CD14-positive monocyte (primary cell): ENCODE measurements at regions of chr17 and their contacts with region 1.

Region 1: DNA sequence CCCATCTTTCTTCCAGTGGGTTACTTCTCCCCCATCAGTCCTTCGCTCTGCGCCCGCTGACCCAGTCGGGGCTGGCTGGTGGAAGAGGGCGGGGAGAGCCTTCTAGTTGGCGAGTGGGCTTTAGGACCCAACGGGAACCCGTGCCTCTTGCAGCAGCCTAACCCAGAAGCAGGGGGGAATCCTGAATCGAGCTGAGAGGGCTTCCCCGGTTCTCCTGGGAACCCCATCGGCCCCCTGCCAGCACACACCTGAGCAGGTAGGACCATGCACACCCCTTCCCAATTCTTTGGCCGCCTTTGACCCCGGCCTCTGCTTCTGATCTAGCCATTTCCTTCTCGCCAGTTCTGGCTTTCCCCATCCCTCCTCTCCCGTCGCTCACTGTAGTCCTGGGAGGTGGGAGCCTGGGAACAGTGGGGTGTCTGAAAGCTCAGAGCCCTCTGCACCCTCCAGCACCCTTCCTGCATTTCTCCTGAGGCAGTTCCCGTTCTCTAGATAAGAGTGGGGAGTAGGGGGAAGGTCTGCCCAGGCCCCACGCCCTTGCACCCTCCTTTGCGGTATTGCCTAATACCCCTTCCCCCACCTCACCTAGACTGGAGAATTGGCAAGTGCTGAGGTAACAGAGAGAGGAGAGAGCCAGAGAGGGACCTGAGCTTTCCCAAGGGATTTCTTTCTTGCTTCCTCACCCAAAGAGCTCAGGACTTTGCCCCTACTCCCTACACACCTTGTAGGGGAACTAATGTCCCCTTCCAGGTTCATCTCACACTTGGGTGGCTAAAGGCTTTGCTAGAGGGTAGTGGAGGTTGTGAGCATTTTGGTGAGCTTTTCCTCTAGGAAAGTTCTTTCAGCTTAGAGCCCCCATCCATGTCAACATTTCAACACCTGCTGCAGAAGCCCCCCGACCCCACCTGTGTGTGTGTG is at the start of gene RARA:
- DNase-seq: peak in 1 of 3 donors; percentile 37
- H3K4me3 ChIP-seq: peak within 1 kb of the TSS; percentile 13 to 80 (median 41)
- H3K4me3 Mint-ChIP-seq: no peak within 1 kb of the TSS
- H3K27ac ChIP-seq: peak within 1 kb of the TSS in 1 of 2 donors; percentile 74
- H3K27ac Mint-ChIP-seq: peak within 1 kb of the TSS in 2 of 7 donors; percentile 49 to 89
- H3K4me1 ChIP-seq: peaks cover 67 to 77% of the 10 kb centered on the region in 2 donors
- H3K4me1 Mint-ChIP-seq: peaks cover 2% of the 10 kb centered on the region
- H3K27me3 ChIP-seq: no peaks in the 10 kb centered on the region
- H3K27me3 Mint-ChIP-seq: peaks cover 0 to 8% (median 5%) of the 10 kb centered on the region in 3 donors
- CTCF ChIP-seq: no peak
- polyA plus RNA-seq, gene RARA: 14.9 to 63.9 (median 29.4) TPM

Region 2: GRCh38 chr17:40251576-40251975 is 57.7 kb before region 1 on chr17:
- intact Hi-C with region 1: no loop called
- DNase-seq: peak in 1 of 3 donors; percentile 11
- H3K4me3 ChIP-seq: no peak overlapping the region
- H3K4me3 Mint-ChIP-seq: no peak overlapping the region
- H3K27ac ChIP-seq: peak overlapping the region in 1 of 2 donors; percentile 2
- H3K27ac Mint-ChIP-seq: no peak overlapping the region
- H3K4me1 ChIP-seq: peaks cover 5 to 11% of the 10 kb centered on the region in 2 donors
- H3K4me1 Mint-ChIP-seq: peaks cover 18% of the 10 kb centered on the region
- H3K27me3 ChIP-seq: no peaks in the 10 kb centered on the region
- H3K27me3 Mint-ChIP-seq: no peaks in the 10 kb centered on the region
- CTCF ChIP-seq: no peak

Region 3: DNA sequence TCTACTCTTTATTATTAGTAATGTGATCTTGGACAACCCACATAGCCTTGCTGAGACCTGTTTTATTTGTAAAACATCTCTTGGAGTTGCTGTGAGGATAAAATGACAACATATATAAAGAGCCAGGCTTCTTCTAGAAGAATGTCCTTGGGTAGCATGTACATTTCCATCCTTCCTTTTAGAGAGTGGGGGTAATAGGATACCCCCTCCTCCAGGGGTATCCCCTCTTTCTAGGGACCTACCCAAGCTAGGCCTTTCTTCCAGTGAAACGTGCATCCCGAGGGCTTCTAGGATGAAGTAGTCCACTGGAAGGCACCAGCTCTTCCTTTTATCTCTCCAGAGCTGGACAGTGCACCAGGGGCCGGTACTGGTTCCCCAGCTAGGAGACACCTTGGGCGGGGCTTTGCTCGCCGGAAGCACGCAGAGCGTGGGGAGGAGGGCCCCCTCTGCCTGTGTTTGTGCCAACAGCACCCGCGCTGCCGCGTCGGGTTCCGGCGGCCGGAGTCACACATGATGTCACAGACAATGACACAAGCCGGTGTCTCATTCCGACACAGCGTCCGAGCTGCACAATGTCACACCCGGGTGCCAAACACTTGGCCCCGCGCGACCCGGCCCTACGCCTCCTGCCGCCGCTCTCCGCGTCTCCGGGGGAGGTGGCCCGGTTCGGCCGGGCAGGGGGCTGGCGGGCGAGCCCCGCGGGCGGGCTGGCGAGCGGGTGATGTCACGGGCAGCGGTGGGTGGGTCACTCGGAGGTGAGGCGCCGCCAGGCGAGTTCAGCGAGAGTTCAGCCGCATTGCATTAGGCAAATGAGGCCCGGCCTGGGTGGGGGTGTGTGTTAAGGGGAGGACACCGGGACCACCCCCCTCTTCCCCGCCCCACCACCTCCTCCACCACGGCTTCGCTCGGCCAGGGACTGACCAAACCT is 31.9 kb after region 1 on chr17:
- intact Hi-C with region 1: loop called in 1 of 2 experiments (anchors 5 kb)
- DNase-seq: peak; percentile 97 to 98 (median 98)
- H3K4me3 ChIP-seq: peak overlapping the region; percentile 66 to 99 (median 90)
- H3K4me3 Mint-ChIP-seq: peak overlapping the region; percentile 84 to 99
- H3K27ac ChIP-seq: peak overlapping the region; percentile 94 to 97
- H3K27ac Mint-ChIP-seq: peak overlapping the region; percentile 88 to 97 (median 95)
- H3K4me1 ChIP-seq: peaks cover 81 to 83% of the 10 kb centered on the region in 2 donors
- H3K4me1 Mint-ChIP-seq: peaks cover 70% of the 10 kb centered on the region
- H3K27me3 ChIP-seq: no peaks in the 10 kb centered on the region
- H3K27me3 Mint-ChIP-seq: peaks cover 2 to 4% (median 3%) of the 10 kb centered on the region in 3 donors
- CTCF ChIP-seq: peak; percentile 34

Region 4: GRCh38 chr17:40355123-40355803 is 46.0 kb after region 1 on chr17:
- intact Hi-C with region 1: loop called in 1 of 2 experiments (anchors 2 kb)
- DNase-seq: peak; percentile 64 to 73 (median 73)
- H3K4me3 ChIP-seq: no peak overlapping the region
- H3K4me3 Mint-ChIP-seq: no peak overlapping the region
- H3K27ac ChIP-seq: no peak overlapping the region
- H3K27ac Mint-ChIP-seq: peak overlapping the region in 4 of 7 donors; percentile 31 to 81 (median 66)
- H3K4me1 ChIP-seq: peaks cover 18 to 49% of the 10 kb centered on the region in 2 donors
- H3K4me1 Mint-ChIP-seq: peaks cover 44% of the 10 kb centered on the region
- H3K27me3 ChIP-seq: no peaks in the 10 kb centered on the region
- H3K27me3 Mint-ChIP-seq: peaks cover 3 to 5% (median 4%) of the 10 kb centered on the region in 3 donors
- CTCF ChIP-seq: peak; percentile 98

Region 5: GRCh38 chr17:40791787-40792436 is 482.6 kb after region 1 on chr17:
- intact Hi-C with region 1: no loop called
- DNase-seq: no peak
- H3K4me3 ChIP-seq: no peak overlapping the region
- H3K4me3 Mint-ChIP-seq: no peak overlapping the region
- H3K27ac ChIP-seq: no peak overlapping the region
- H3K27ac Mint-ChIP-seq: no peak overlapping the region
- H3K4me1 ChIP-seq: no peaks in the 10 kb centered on the region
- H3K4me1 Mint-ChIP-seq: no peaks in the 10 kb centered on the region
- H3K27me3 ChIP-seq: peaks cover 5 to 23% of the 10 kb centered on the region in 2 donors
- H3K27me3 Mint-ChIP-seq: peaks cover 14 to 32% (median 22%) of the 10 kb centered on the region in 3 donors
- CTCF ChIP-seq: peak; percentile 11